Activated naive CD8-positive, alpha-beta T cell treated with anti-CD3 and anti-CD28 coated beads, Interleukin-2, amount 10 ng/mL, durations not matched to agents 7 days and 5 days (primary cell): ENCODE measurements at regions of chr5 and their contacts with region 1.

Region 1: DNA sequence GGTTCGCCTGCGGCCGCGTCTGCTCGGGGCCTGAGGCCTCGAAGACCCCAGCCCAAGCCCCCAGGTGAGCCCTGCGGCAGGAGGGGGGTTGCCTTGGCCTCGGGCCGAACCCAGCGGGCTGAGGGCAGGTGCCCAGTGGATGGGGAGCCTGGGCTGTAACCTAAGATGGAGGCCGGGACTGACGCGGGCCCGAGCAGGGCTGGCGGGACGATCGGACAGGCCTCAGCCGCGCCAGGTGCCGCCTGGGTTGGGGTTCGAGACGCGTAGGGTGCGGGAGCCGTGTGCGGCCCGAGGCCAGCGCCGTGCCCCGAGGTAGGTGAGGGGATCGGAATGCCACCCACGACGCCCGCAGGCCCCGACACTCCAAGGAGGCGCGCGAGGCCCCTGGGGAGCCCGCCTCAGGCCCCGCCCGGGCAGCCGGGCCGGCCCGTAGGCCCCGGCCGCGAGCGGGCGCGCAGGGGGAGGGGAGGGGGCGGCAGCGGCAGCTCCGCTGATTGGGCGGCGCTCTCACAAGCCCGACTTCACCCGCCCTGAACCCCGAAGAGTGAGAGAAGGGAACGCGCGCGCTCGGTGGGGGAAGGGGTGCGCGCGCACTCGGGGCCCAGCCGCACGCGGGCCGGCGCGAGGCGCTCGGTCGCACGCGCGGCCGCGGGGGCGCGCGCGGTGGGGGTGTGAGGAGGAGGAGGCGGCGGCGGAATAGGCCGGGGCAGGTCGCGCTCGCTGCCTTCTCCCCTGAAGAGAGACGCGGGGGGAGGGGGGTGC is at the start of gene NSD1:
- DNase-seq: peak; percentile 97
- ATAC-seq: peak; percentile 72
- H3K4me3 Mint-ChIP-seq: peak within 1 kb of the TSS; percentile 91
- H3K27ac Mint-ChIP-seq: peak within 1 kb of the TSS; percentile 93
- H3K4me1 Mint-ChIP-seq: peaks cover 37% of the 10 kb centered on the region
- H3K27me3 Mint-ChIP-seq: no peaks in the 10 kb centered on the region
- total RNA-seq, gene NSD1: 96.2 to 101 TPM

Region 2: DNA sequence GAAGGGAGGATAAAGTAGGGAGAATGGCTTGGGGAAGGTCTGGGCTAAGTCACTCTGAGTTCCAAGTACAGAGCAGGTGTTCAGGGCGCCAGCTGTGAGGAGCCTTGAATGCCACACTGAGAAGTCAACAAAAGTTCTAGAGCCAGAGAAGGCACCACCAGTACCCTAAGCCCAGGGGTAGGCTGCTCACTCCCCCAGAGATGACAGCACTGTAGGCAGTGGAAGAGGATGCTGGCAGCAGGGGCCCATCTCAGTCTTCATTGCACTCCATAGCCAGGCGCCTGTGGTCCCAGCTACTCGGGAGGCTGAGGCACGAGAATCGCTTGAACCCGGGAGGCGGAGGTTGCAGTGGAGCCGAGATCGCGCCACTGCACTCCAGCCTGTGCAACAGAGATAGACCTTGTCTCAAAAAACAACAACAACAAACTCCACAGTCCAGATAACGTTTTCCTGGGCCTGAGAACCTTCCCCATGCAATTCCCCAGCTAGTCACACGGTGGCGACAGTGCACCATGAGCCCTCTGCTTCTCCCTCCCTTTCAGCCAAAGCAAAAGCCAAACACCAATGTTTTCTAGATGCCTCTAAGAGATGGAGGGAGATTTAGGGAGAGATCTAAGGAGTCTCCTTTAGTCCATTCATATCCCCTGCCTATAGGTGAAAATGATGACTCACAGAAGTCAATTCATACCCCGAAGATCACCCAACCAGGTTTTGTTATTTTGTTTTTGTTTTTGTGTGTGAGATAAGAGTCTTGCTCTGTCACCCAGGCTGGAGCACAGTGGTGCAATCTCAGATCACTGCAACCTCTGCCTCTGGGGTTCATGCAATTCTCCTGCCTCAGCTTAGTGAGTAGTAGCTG is 19.5 kb before region 1 on chr5:
- POLR2A ChIA-PET with region 1: interaction called, 17 read pairs
- DNase-seq: peak; percentile 86
- ATAC-seq: peak; percentile 40
- H3K4me3 Mint-ChIP-seq: peak overlapping the region; percentile 59
- H3K27ac Mint-ChIP-seq: peak overlapping the region; percentile 40
- H3K4me1 Mint-ChIP-seq: peaks cover 24% of the 10 kb centered on the region
- H3K27me3 Mint-ChIP-seq: peaks cover 1% of the 10 kb centered on the region

Region 3: DNA sequence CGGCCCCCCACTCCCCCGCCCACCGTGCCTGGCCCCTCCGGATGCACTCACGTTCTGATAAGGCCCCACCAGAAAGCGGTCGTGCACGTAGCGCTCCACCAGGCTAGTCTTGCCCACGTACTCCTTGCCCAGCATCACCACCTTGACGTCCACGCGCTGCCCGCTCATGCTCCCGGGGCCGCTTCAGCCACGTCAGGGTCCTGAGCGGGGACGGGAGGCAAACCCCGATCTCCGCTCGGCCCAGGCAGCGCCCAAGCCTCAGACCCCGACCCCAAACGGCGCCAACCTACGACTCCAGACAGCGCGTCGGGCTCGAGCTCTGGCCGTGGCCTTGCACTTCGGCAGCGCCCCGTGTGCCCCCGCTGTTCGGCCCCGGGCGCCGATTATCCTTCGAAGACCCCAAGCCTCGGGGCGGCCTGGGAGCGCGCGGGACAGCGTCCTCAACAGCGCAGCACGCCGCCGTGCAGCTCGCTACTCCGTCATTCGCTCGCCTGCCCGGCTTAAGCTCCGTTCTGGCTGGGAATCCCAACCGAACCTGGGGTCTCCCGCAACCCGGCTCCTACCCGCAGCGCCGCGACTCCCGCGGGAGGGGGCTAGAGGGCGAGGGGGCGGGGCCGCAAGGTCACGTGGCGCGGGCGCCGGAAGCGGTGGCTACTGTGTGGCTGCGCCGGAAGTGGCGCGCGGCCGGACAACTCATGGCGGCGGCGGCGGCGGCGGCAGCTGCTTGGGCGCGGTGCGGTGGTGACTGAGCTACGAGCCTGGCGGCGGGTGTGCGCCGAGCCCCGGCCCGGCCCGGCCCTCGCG is 170.1 kb after region 1 on chr5 and contains the starts of genes PRELID1 and RAB24:
- POLR2A ChIA-PET with region 1: interaction called, 15 read pairs
- DNase-seq: peak; percentile 95
- ATAC-seq: peak; percentile 51
- H3K4me3 Mint-ChIP-seq: peak within 1 kb of the TSS; percentile 95
- H3K27ac Mint-ChIP-seq: peak within 1 kb of the TSS; percentile 88
- H3K4me1 Mint-ChIP-seq: peaks cover 55% of the 10 kb centered on the region
- H3K27me3 Mint-ChIP-seq: no peaks in the 10 kb centered on the region
- total RNA-seq, gene PRELID1: 104 TPM
- total RNA-seq, gene RAB24: 39.0 to 46.6 TPM